Cardiac septum (tissue), 1 donor: ENCODE measurements at regions of chr1 and their contacts with region 1.

Region 1: GRCh38 chr1:224454397-224455066 is 19.9 kb upstream of the WDR26 start:
- DNase-seq: no peak

Region 2: GRCh38 chr1:224113918-224114786 is 340.4 kb before region 1 on chr1 and contains the start of gene FBXO28:
- intact Hi-C with region 1: loop called (anchors 2 kb)
- DNase-seq: peak; percentile 97
- total RNA-seq, gene FBXO28: 23.9 TPM

Region 3: GRCh38 chr1:224356685-224357625 is 97.6 kb before region 1 on chr1 and contains the start of gene CNIH4:
- intact Hi-C with region 1: loop called (anchors 2 kb)
- DNase-seq: peak; percentile 94
- total RNA-seq, gene CNIH4: 30.1 TPM

Region 4: DNA sequence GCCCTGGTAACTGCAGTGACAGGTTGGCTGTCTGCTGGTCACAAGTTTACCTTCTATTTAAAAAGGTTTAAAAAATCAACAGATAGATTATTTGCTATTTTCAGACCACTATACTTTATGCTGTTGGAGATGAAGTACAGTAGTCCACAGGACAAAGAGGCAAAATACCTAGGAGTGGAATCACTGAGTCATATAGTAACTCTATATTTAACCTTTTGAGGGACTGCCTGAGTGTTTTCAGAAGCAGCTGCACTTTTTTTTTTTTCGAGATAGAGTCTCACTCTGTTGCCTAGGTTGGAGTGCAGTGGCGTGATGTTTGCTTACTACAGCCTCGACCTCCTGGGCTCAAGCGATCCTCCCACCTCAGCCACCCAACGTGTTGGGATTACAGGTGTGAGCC is 86.1 kb before region 1 on chr1:
- intact Hi-C with region 1: loop called (anchors 2 kb)
- DNase-seq: no peak

Region 5: DNA sequence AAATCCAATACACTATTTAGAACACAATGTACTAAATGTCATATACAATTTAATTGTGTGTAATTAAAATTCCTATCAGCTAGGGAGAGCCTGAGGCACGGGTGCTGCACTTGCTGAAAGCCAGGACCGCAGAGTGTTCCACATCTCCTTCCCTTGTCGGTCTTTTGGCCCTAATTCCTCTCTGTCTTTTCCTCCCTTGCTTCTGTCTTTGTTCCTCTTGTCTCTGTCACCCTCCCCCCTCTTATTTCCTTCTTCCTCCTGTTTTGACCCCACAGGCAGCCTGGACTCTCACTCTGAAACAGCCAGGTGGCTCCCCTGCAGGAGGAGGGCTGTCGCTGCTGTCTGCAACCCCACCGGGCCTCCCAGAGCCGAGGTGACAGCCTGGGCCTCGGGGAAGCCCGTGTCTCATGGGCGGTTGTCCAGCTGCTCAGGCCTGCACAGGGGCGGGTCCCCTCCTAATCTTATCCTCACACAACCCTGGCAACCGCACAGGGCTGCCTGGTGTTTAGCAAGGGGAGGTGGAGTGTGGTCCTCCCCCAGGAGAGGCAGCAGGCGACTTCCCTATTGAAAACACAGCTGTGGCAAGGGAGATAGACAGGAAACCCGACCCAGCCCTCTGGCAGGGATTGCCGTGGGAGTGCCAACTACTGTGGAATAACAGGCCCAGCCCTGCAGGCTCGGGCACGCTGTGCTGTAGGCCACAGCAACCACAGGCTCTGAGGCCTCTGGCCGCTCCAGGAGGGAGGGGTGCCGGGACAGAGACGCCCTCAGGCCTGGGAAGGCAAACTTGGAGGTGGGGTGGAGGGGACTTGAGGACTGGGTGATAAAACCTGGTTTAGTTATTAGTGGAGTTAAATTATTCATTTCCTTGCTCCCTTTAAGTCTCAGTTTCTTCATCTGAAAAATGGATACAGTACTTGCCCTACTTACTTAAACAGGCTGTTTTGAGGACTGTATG is 48.9 kb after region 1 on chr1:
- intact Hi-C with region 1: loop called (anchors 5 kb)
- DNase-seq: peak; percentile 94